ENCODE measurements at regions of chr19 and their contacts with region 1.

Region 1: DNA sequence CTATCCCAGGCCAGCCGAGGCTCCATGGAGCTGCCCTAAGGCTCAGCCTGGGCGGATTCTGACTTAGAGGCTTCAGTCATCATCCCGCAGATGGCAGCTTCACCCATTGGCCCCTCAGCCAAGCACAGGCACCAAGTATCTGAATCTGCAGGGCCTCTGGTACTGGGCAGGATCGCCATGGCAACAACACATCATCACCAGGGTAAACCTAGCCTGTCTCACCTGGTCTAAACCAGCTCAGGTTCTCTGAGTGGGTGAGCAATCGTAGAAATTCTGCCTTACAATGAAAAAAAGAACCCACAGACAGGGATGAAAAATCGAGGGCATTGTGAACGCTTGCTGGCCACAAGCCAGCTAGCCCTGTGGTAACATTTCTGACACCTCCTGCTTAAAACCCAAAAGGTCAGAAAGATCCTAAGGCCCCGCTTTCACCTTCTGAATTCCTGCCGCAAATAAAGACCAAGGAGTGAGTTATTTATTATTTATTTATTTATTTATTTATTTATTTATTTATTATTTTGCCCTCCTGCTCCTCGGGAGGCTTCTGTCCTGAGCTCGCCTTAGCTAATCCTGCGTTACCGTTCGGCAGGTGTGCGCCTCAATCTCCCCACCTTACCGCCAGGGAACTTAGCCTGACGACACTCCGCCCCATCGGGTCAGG is 12.0 kb upstream of the CEACAM21 start:
- DNase-seq: no peak
- H3K4me3 ChIP-seq: no peak overlapping the region
- H3K27ac ChIP-seq: no peak overlapping the region
- H3K4me1 ChIP-seq: no peaks in the 10 kb centered on the region
- H3K27me3 ChIP-seq: peaks cover 76% of the 10 kb centered on the region

Region 2: DNA sequence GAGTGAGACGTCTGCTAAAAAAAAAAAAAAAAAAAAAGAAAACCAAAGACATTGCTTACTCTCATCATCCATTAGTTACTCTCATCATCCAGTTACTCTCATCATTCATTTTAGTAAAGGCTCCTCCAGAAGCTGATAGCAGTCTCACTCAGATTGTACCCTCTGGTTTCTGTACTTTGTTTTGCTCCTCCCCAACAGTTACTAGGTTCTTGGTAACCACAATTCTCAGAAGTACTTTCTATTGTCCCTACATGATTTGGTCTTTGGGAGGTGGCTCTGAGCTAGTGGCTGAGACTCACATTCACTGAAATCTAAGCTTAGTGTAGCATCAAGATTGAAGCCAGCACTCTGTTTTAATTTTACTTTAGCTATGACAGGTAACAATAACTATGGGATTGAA is 106.7 kb before region 1 on chr19:
- in situ Hi-C with region 1: loop called (anchors 5 kb)
- DNase-seq: no peak
- H3K4me3 ChIP-seq: no peak overlapping the region
- H3K27ac ChIP-seq: no peak overlapping the region
- H3K4me1 ChIP-seq: peaks cover 12% of the 10 kb centered on the region
- H3K27me3 ChIP-seq: peaks cover 36% of the 10 kb centered on the region; the same call in 1 of the 2 replicates

Region 3: DNA sequence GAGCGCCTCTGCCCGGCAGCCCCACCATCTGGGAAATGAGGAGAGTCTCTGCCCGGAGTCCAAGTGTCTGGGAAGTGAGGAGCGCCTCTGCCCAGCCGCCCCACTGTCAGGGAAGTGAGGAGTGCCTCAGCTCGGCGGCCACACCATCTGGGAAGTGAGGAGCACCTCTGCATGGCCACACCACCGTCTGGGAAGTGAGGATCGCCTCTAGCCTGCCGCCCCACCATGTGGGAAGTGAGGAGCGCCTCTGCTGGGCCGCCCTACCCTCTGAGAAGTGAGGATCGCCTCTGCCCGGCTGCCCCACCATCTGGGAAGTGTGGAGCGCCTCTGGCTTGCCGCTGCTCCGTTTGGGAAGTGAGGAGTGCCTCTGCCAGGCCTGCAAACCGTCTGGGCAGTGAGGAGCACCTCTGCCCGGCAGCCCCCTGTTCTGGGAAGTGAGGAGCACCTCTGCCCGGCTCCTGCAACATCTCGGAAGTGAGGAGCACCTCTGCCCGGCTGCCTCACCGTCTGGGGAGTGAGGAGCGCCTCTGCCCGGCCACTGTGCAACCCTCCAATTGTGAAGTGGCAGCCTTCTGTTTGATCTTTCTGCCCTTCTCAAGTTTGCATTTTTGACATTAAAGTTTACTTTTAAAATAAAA is 48.9 kb before region 1 on chr19:
- in situ Hi-C with region 1: no loop called
- DNase-seq: no peak
- H3K4me3 ChIP-seq: no peak overlapping the region
- H3K27ac ChIP-seq: no peak overlapping the region
- H3K4me1 ChIP-seq: no peaks in the 10 kb centered on the region
- H3K27me3 ChIP-seq: peaks cover 73% of the 10 kb centered on the region

Measured in GM23248 (cell line).